CD14-positive monocyte (primary cell): ENCODE measurements at regions of chr2 and their contacts with region 1.

Region 1: GRCh38 chr2:152635635-152636298 is 81.5 kb downstream of the PRPF40A start:
- DNase-seq: peak; percentile 30 to 64 (median 57)
- H3K4me3 ChIP-seq: no peak overlapping the region
- H3K4me3 Mint-ChIP-seq: no peak overlapping the region
- H3K27ac ChIP-seq: no peak overlapping the region
- H3K27ac Mint-ChIP-seq: no peak overlapping the region
- H3K4me1 ChIP-seq: peaks cover 3 to 9% of the 10 kb centered on the region in 2 donors
- H3K4me1 Mint-ChIP-seq: peaks cover 7% of the 10 kb centered on the region
- H3K27me3 ChIP-seq: no peaks in the 10 kb centered on the region
- H3K27me3 Mint-ChIP-seq: peaks cover 2% of the 10 kb centered on the region in 3 donors
- CTCF ChIP-seq: peak; percentile 95

Region 2: DNA sequence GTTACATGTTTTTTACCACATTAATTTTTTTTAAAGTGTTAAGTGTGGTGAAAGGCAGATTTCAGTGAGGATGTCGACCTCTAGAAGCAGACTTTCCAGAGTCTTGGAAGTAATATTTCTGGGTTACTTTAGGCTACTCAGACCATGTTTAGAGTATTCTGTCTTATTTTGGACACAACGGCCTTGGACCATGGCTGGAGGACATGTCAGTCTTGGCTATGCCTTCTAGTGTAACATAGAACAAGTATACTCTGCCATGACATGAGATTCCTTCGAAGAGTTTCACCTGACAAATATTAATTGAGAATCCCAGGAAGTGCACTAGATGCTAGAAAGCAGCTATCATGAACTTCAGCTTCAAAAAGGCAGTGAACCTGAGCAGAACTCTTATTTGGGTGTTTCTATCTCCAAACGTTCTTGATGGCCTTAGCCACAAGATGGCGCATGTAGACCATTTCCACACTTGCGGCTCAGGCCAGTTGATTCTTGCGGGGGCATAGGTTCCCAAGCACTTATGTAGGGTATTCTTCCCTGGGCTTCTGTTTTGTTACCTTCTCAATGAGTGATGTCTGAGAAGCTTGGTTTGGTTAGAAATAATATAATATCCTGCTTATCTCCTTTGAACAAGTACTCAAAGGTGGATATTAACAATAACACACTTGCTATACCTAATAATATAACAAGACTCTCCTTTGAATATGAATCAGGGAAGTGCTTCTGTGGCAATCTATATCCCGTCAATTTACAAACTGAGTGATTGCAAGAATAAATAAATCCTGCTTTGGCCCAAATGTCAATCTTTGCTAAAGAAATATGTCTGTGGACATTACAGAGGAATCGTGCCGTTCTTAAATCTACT is 598.9 kb before region 1 on chr2:
- intact Hi-C with region 1: loop called (anchors 10 kb)
- DNase-seq: peak; percentile 45 to 73 (median 66)
- H3K4me3 ChIP-seq: no peak overlapping the region
- H3K4me3 Mint-ChIP-seq: no peak overlapping the region
- H3K27ac ChIP-seq: no peak overlapping the region
- H3K27ac Mint-ChIP-seq: peak overlapping the region in 1 of 7 donors; percentile 16
- H3K4me1 ChIP-seq: peaks cover 10 to 15% of the 10 kb centered on the region in 2 donors
- H3K4me1 Mint-ChIP-seq: peaks cover 12% of the 10 kb centered on the region
- H3K27me3 ChIP-seq: no peaks in the 10 kb centered on the region
- H3K27me3 Mint-ChIP-seq: peaks cover 0 to 2% (median 0%) of the 10 kb centered on the region in 3 donors
- CTCF ChIP-seq: peak; percentile 85

Region 3: GRCh38 chr2:152175458-152176325 is 460.1 kb before region 1 on chr2 and contains the start of gene STAM2:
- intact Hi-C with region 1: loop called (anchors 5 kb)
- DNase-seq: peak; percentile 89 to 92 (median 90)
- H3K4me3 ChIP-seq: peak within 1 kb of the TSS; percentile 70 to 95 (median 88)
- H3K4me3 Mint-ChIP-seq: peak within 1 kb of the TSS; percentile 93 to 96
- H3K27ac ChIP-seq: peak within 1 kb of the TSS; percentile 92 to 99
- H3K27ac Mint-ChIP-seq: peak within 1 kb of the TSS; percentile 99 to 100 (median 100)
- H3K4me1 ChIP-seq: peaks cover 29 to 33% of the 10 kb centered on the region in 2 donors
- H3K4me1 Mint-ChIP-seq: peaks cover 37% of the 10 kb centered on the region
- H3K27me3 ChIP-seq: no peaks in the 10 kb centered on the region
- H3K27me3 Mint-ChIP-seq: peaks cover 0 to 3% (median 2%) of the 10 kb centered on the region in 3 donors
- CTCF ChIP-seq: peak; percentile 95
- polyA plus RNA-seq, gene STAM2: 6.9 to 12.6 (median 8.2) TPM

Region 4: GRCh38 chr2:152189622-152190495 is 445.9 kb before region 1 on chr2:
- intact Hi-C with region 1: loop called (anchors 5 kb)
- DNase-seq: peak; percentile 30 to 44 (median 42)
- H3K4me3 ChIP-seq: no peak overlapping the region
- H3K4me3 Mint-ChIP-seq: no peak overlapping the region
- H3K27ac ChIP-seq: no peak overlapping the region
- H3K27ac Mint-ChIP-seq: no peak overlapping the region
- H3K4me1 ChIP-seq: no peaks in the 10 kb centered on the region
- H3K4me1 Mint-ChIP-seq: no peaks in the 10 kb centered on the region
- H3K27me3 ChIP-seq: no peaks in the 10 kb centered on the region
- H3K27me3 Mint-ChIP-seq: peaks cover 0 to 6% (median 0%) of the 10 kb centered on the region in 3 donors
- CTCF ChIP-seq: peak; percentile 64

Region 5: DNA sequence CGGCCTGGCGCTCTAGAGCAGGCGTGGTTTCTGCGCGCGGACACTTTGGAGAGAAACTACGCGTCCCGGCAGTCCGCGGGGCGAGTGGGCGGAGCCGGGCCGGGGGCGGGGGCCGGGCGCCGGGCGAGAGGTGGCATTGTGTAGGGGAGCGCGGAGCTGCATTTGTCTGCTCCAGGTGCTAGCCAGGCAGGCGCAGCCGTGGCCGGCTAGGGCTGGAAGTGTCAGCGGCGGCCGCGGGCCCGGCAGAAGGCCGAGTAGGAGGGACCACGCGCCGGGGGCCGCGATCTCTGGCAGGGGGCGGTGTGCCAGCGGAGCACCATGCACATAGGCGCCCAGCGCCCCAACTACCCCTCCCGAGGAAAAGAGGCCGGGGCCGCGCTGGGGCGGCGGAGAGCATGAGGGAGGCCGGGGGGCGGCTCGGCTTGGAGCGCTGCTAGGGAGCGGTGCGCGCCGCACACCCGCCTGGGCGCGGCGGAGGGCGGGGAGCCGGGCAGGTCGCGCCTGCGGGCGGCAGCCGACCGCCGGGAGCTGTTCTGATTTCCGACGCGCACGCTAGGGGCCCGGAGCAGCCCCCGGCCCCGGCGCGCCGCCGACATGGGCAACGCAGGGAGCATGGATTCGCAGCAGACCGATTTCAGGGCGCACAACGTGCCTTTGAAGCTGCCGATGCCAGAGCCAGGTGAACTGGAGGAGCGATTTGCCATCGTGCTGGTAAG is 300.6 kb before region 1 on chr2 and contains the start of gene FMNL2:
- intact Hi-C with region 1: loop called in 1 of 2 experiments (anchors 10 kb)
- DNase-seq: peak; percentile 20 to 38 (median 23)
- H3K4me3 ChIP-seq: peak within 1 kb of the TSS; percentile 53 to 88 (median 76)
- H3K4me3 Mint-ChIP-seq: peak within 1 kb of the TSS; percentile 86 to 94
- H3K27ac ChIP-seq: no peak within 1 kb of the TSS
- H3K27ac Mint-ChIP-seq: peak within 1 kb of the TSS in 2 of 7 donors; percentile 26 to 68
- H3K4me1 ChIP-seq: peaks cover 13 to 21% of the 10 kb centered on the region in 2 donors
- H3K4me1 Mint-ChIP-seq: peaks cover 26% of the 10 kb centered on the region
- H3K27me3 ChIP-seq: peaks cover 26 to 39% of the 10 kb centered on the region in 2 donors
- H3K27me3 Mint-ChIP-seq: peaks cover 33 to 47% (median 37%) of the 10 kb centered on the region in 3 donors
- CTCF ChIP-seq: peak; percentile 10
- polyA plus RNA-seq, gene FMNL2: 0.28 to 3.2 (median 0.71) TPM

Region 6: DNA sequence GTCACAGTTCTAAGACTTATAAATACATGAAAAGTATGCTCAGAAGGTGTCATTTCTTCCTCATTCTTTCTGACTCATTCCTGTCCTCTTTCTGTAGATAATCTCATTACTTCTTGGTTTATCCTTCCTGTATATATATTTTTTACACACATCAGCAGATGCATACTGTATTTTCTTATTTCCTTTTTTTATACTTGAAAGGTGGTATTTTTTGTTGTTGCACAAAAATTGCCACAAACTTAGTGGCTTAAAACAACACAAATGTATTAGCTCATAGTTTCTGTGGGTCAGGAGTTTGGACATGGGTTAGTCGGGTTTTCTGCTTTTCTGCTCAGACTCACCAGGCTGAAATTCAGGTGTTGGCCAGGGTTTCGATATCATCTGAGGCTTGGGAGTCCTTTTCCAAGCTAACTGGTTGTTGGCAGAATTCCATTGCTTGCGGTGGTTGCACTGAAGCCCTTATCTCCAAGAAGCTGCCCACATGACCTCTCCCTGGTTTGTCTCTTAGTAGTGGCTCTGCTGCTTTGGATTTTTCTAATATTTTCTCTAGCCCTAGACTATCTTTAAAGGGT is 138.2 kb before region 1 on chr2:
- intact Hi-C with region 1: no loop called
- DNase-seq: peak in 1 of 3 donors; percentile 56
- H3K4me3 ChIP-seq: no peak overlapping the region
- H3K4me3 Mint-ChIP-seq: no peak overlapping the region
- H3K27ac ChIP-seq: no peak overlapping the region
- H3K27ac Mint-ChIP-seq: peak overlapping the region in 4 of 7 donors; percentile 4 to 82 (median 53)
- H3K4me1 ChIP-seq: peaks cover 3 to 12% of the 10 kb centered on the region in 2 donors
- H3K4me1 Mint-ChIP-seq: peaks cover 20% of the 10 kb centered on the region
- H3K27me3 ChIP-seq: no peaks in the 10 kb centered on the region
- H3K27me3 Mint-ChIP-seq: peaks cover 0 to under 1% (median 0%) of the 10 kb centered on the region in 3 donors
- CTCF ChIP-seq: no peak